Activated CD4-positive, alpha-beta T cell treated with anti-CD3 and anti-CD28 coated beads for 36 hours (primary cell): ENCODE measurements at regions of chr10 and their contacts with region 1.

Region 1: GRCh38 chr10:60434418-60435046 is 44.9 kb upstream of the ANK3 start:
- DNase-seq: peak; percentile 17
- ATAC-seq: no peak
- H3K4me3 Mint-ChIP-seq: no peak overlapping the region
- H3K27ac Mint-ChIP-seq: no peak overlapping the region
- H3K4me1 Mint-ChIP-seq: peaks cover 6% of the 10 kb centered on the region
- H3K27me3 Mint-ChIP-seq: no peaks in the 10 kb centered on the region

Region 2: GRCh38 chr10:60114765-60115586 is 319.6 kb before region 1 on chr10:
- CTCF ChIA-PET with region 1: interaction called, 15 read pairs
- POLR2A ChIA-PET with region 1: no interaction called
- intact Hi-C with region 1: loop called (anchors 1 to 2 kb)
- DNase-seq: peak; percentile 16
- ATAC-seq: peak; percentile 60
- H3K4me3 Mint-ChIP-seq: no peak overlapping the region
- H3K27ac Mint-ChIP-seq: no peak overlapping the region
- H3K4me1 Mint-ChIP-seq: no peaks in the 10 kb centered on the region
- H3K27me3 Mint-ChIP-seq: no peaks in the 10 kb centered on the region

Region 3: DNA sequence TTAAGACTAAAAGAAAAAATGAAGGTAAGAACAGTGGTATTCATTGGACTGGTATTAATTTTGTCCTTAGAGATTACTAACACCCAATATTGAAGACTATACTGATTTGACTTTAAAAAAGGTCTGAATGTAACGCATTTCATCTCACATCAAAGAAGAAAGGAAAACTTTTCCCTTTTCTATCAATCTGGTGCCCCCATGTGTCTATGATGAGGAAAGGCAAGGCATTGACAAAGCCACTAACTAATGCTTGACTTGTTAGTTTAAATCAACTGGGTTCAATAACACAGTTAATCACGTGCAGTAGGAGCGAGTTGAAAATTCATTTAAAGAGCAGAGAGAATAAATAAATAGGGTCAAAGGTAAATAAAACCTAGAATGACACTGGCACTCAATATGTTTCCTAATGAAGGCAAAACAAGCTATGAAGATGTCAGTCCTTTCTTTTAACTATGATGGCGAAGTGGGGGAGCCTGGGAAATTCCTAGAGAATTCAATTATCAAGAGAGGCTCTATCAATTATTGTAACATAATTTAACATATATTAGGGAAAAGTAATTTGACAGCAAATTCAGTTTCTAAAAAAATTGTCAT is 225.8 kb before region 1 on chr10:
- CTCF ChIA-PET with region 1: interaction called, 14 read pairs
- POLR2A ChIA-PET with region 1: no interaction called
- intact Hi-C with region 1: loop called (anchors 1 kb)
- DNase-seq: no peak
- ATAC-seq: no peak
- H3K4me3 Mint-ChIP-seq: no peak overlapping the region
- H3K27ac Mint-ChIP-seq: no peak overlapping the region
- H3K4me1 Mint-ChIP-seq: peaks cover 15% of the 10 kb centered on the region
- H3K27me3 Mint-ChIP-seq: no peaks in the 10 kb centered on the region